ENCODE measurements at regions of chr17 and their contacts with region 1.

Region 1: DNA sequence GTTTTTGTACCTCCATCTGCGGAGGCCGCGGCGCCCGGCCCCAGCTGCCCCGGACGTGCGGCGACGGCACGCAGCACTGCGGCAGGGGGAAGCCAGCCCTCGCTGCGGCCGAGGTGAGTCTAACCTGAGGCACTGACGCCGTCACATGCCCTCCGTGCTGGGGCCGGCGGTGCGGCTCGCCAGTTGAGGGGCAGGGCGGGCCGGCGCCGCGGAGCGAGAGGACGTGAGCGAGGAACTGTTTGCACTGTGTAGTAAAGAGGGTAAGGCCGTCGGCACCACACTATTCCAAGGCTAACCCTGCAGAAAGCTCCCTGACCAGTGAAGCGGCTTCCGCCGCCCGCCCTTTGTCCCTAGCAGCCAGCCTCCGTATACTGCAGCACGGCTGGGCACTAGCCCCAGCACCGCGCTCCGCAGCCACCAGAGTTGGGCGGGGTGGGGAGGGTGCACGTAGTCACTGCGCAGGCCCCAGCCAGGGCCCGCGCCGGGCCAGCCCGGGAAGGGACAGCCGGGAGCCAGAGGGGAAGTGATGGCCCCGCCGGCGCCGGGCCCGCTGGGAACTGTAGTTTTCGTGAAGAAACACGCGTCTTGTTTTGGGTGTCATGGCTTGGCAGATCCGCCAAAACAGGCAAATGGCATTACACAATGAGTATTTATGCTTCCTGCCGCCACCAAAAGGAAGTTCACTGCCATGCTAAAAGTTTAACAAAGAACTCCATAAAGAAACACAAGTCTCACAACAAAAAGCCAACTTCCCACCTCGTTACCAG is 580 bp upstream of the KANSL1 start:
- DNase-seq: peak; percentile 96 to 97
- ATAC-seq: peak; percentile 93 to 98 (median 94)
- H3K4me3 ChIP-seq: peak overlapping the region; percentile 69 to 96 (median 86)
- H3K27ac ChIP-seq: peak overlapping the region; percentile 98 to 100 (median 100)
- H3K4me1 ChIP-seq: peaks cover 14 to 56% (median 42%) of the 10 kb centered on the region in 9 donors
- H3K27me3 ChIP-seq: no peaks in the 10 kb centered on the region
- CTCF ChIP-seq: peak in 8 of 9 donors; percentile 4 to 66 (median 25)

Region 2: GRCh38 chr17:46002311-46002972 is 191.4 kb before region 1 on chr17:
- intact Hi-C with region 1: loop called in 1 of 10 experiments (anchors 5 kb)
- DNase-seq: peak; percentile 33 to 61
- ATAC-seq: peak; percentile 63 to 90 (median 83)
- H3K4me3 ChIP-seq: no peak overlapping the region
- H3K27ac ChIP-seq: no peak overlapping the region
- H3K4me1 ChIP-seq: peaks cover 0 to 13% (median 0%) of the 10 kb centered on the region in 9 donors
- H3K27me3 ChIP-seq: no peaks in the 10 kb centered on the region
- CTCF ChIP-seq: peak; percentile 88 to 96 (median 94)

Region 3: DNA sequence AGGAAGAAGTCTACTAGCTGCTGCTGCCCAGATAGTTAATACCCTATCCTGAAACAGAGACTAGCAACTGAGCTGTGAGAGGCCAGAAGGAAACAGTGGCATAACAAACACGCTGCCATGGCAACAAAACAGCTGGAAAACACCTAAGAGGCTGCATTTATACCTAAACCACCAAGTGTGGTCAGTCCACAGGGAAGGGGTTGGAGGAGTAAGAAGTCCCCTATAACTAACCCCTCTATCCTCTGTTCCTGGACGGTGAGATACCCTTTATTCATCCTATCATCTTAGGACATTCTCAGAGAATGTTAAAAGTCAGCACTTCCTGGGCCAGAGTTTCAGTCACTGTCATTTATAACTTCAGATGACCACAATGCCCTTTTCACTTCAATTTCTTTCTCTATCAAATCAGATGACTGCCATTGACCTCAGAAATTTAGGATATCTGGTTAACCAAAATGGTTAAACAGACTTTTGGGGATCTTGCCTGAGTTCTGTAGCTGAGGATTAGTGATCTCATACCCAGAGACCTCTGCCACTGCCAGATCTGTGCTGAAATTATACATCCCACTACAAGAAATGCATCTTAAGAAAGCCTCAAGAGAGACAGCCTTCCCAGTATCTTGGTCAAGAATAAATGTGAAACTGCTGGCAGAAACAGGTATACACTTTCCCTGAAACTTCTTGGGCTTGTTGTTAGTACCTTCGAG is 158.5 kb before region 1 on chr17:
- intact Hi-C with region 1: loop called in 3 of 10 experiments (anchors 5 kb)
- DNase-seq: no peak
- ATAC-seq: no peak
- H3K4me3 ChIP-seq: no peak overlapping the region
- H3K27ac ChIP-seq: no peak overlapping the region
- H3K4me1 ChIP-seq: peaks cover 0 to 21% (median 10%) of the 10 kb centered on the region in 9 donors
- H3K27me3 ChIP-seq: no peaks in the 10 kb centered on the region
- CTCF ChIP-seq: no peak

Region 4: GRCh38 chr17:46044286-46044928 is 149.4 kb before region 1 on chr17:
- intact Hi-C with region 1: loop called (anchors 1 to 5 kb)
- DNase-seq: peak in 1 of 2 donors; percentile 88
- ATAC-seq: peak; percentile 66 to 88 (median 82)
- H3K4me3 ChIP-seq: no peak overlapping the region
- H3K27ac ChIP-seq: peak overlapping the region in 7 of 10 donors; percentile 3 to 47 (median 23)
- H3K4me1 ChIP-seq: peaks cover 0 to 53% (median 32%) of the 10 kb centered on the region in 9 donors
- H3K27me3 ChIP-seq: no peaks in the 10 kb centered on the region
- CTCF ChIP-seq: peak; percentile 74 to 93 (median 85)

Region 5: GRCh38 chr17:46108550-46109110 is 85.2 kb before region 1 on chr17:
- intact Hi-C with region 1: loop called in 1 of 10 experiments (anchors 5 kb)
- DNase-seq: no peak
- ATAC-seq: no peak
- H3K4me3 ChIP-seq: no peak overlapping the region
- H3K27ac ChIP-seq: peak overlapping the region in 6 of 10 donors; percentile 9 to 48 (median 24)
- H3K4me1 ChIP-seq: peaks cover 9 to 76% (median 51%) of the 10 kb centered on the region in 9 donors
- H3K27me3 ChIP-seq: no peaks in the 10 kb centered on the region
- CTCF ChIP-seq: no peak

Region 6: DNA sequence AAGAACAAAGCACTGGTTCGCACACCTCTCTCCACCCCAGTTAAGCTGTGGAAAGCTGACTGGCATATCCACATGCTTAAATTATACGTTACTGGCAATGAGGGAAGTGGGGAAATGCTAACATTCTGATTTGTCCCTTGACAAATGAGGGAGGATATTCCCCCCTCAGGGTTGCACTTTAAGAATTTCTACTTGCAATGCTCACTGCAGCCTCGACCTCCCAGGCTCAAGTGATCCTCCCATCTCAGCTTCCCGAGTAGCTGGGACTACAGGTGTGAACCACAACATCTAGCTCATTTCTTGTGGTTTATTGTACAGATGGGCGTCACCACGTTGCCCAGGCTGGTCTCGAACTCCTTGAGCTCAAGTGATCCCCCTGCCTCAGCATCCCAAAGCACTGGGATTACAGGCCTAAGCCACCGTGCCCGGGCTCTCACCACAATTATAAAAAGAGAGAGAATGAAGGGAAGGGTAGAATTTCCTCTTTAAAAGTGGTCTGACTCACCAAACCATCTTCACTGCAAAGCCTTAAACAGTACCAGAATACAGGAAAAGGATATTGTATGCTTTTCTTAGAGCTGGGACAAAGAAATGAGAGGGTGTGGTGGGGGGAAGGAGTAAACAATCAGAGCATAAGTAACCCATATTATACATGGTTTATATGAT is 39.5 kb before region 1 on chr17:
- intact Hi-C with region 1: loop called in 2 of 10 experiments (anchors 5 kb)
- DNase-seq: no peak
- ATAC-seq: peak in 2 of 8 donors; percentile 27 to 29
- H3K4me3 ChIP-seq: no peak overlapping the region
- H3K27ac ChIP-seq: peak overlapping the region in 5 of 10 donors; percentile 3 to 28 (median 11)
- H3K4me1 ChIP-seq: peaks cover 32 to 100% (median 96%) of the 10 kb centered on the region in 9 donors
- H3K27me3 ChIP-seq: no peaks in the 10 kb centered on the region
- CTCF ChIP-seq: no peak

Measured in heart right ventricle (tissue), 16 donors.